BJ (cell line): ENCODE measurements at regions of chr2 and their contacts with region 1.

Region 1: GRCh38 chr2:75466708-75467311 is 93.9 kb downstream of the EVA1A start:
- DNase-seq: no peak
- H3K4me3 ChIP-seq: no peak overlapping the region
- H3K27me3 ChIP-seq: peaks cover 8% of the 10 kb centered on the region
- CTCF ChIP-seq: peak; percentile 57

Region 2: GRCh38 chr2:75491129-75491753 is 24.4 kb after region 1 on chr2:
- CTCF ChIA-PET with region 1: interaction called, 16 read pairs
- POLR2A ChIA-PET with region 1: no interaction called
- DNase-seq: no peak
- H3K4me3 ChIP-seq: no peak overlapping the region
- H3K27me3 ChIP-seq: no peaks in the 10 kb centered on the region
- CTCF ChIP-seq: no peak

Region 3: GRCh38 chr2:75570948-75571729 is 104.3 kb after region 1 on chr2:
- CTCF ChIA-PET with region 1: interaction called, 23 read pairs
- POLR2A ChIA-PET with region 1: no interaction called
- DNase-seq: no peak
- H3K4me3 ChIP-seq: no peak overlapping the region
- H3K27me3 ChIP-seq: no peaks in the 10 kb centered on the region
- CTCF ChIP-seq: no peak

Region 4: GRCh38 chr2:75608684-75609333 is 142.0 kb after region 1 on chr2:
- CTCF ChIA-PET with region 1: interaction called, 215 read pairs
- POLR2A ChIA-PET with region 1: interaction called, 3 read pairs
- DNase-seq: no peak
- H3K4me3 ChIP-seq: no peak overlapping the region
- H3K27me3 ChIP-seq: peaks cover 1% of the 10 kb centered on the region
- CTCF ChIP-seq: peak; percentile 99

Region 5: DNA sequence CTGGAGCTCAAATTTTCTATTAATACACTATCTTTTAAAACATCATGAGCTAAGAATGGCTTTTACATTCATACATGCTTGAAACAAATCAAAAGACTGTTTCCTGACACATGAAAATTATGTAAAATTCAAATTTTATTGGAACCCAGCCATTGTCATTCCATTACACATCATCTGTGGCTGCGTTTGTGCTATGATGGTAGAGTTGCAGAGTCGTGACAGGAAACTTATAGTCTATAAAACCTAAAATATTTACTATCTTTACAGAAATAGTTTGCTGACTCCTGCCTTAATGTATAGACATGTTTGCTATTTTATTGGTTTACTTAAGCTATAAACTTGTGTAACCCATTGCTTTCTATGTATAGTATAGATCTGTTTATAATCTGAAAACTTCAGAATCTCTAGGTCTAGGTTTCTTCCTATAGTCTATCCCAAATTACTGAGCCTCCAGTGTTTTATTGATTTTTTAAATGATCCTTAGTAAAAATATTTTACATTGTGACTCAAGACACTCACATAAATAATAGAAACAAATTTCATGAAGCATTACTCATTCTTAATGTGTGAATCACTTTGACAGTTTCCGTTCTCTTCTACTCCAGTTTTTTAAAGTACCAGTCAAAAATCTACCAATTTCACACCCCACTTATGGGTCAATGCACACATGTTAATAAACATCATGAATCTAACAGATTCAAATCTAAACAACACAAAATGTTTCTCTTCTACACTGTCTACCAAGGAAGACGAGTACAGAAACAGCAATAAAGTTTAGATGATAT is 153.3 kb after region 1 on chr2:
- CTCF ChIA-PET with region 1: interaction called, 82 read pairs
- POLR2A ChIA-PET with region 1: no interaction called
- DNase-seq: no peak
- H3K4me3 ChIP-seq: no peak overlapping the region
- H3K27me3 ChIP-seq: peaks cover 9% of the 10 kb centered on the region
- CTCF ChIP-seq: no peak

Region 6: DNA sequence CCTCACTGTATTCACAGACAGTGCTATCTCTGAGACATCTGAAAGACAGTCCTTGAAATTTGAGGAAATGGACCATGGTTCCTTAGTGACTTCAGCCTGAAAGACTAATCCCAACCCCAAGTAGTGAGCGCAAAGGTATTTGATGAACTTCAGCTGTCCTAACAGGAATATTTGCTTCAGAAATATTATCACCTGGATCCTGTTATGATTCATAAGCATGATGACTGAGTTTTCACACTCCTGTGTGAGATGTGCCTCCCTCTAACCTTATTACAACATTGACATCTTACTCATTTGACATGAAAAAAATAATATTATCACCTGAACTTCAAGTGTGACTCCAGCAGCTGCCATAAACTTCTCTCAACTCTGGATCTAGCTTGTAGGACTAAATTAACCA is 168.1 kb after region 1 on chr2:
- CTCF ChIA-PET with region 1: interaction called, 113 read pairs
- POLR2A ChIA-PET with region 1: no interaction called
- DNase-seq: no peak
- H3K4me3 ChIP-seq: no peak overlapping the region
- H3K27me3 ChIP-seq: peaks cover 8% of the 10 kb centered on the region
- CTCF ChIP-seq: no peak